ENCODE measurements at regions of chr2 and their contacts with region 1.

Region 1: GRCh38 chr2:205505371-205505770 is 176.9 kb upstream of the NRP2 start:
- DNase-seq: peak in 1 of 2 experiments; percentile 62
- H3K4me3 ChIP-seq: no peak overlapping the region
- H3K4me3 Mint-ChIP-seq: no peak overlapping the region
- H3K27ac Mint-ChIP-seq: peak overlapping the region; percentile 45
- H3K4me1 ChIP-seq: peaks cover 26% of the 10 kb centered on the region
- H3K4me1 Mint-ChIP-seq: peaks cover 39% of the 10 kb centered on the region
- H3K27me3 ChIP-seq: no peaks in the 10 kb centered on the region
- H3K27me3 Mint-ChIP-seq: no peaks in the 10 kb centered on the region
- CTCF ChIP-seq: no peak

Region 2: GRCh38 chr2:204900910-204901309 is 604.5 kb before region 1 on chr2:
- CTCF ChIA-PET with region 1: no interaction called
- POLR2A ChIA-PET with region 1: no interaction called
- intact Hi-C with region 1: loop called (anchors 1 kb)
- DNase-seq: peak; percentile 80 to 86
- H3K4me3 ChIP-seq: no peak overlapping the region
- H3K4me3 Mint-ChIP-seq: peak overlapping the region; percentile 48
- H3K27ac Mint-ChIP-seq: peak overlapping the region; percentile 77
- H3K4me1 ChIP-seq: peaks cover 26% of the 10 kb centered on the region
- H3K4me1 Mint-ChIP-seq: peaks cover 44% of the 10 kb centered on the region
- H3K27me3 ChIP-seq: no peaks in the 10 kb centered on the region
- H3K27me3 Mint-ChIP-seq: no peaks in the 10 kb centered on the region
- CTCF ChIP-seq: no peak

Region 3: DNA sequence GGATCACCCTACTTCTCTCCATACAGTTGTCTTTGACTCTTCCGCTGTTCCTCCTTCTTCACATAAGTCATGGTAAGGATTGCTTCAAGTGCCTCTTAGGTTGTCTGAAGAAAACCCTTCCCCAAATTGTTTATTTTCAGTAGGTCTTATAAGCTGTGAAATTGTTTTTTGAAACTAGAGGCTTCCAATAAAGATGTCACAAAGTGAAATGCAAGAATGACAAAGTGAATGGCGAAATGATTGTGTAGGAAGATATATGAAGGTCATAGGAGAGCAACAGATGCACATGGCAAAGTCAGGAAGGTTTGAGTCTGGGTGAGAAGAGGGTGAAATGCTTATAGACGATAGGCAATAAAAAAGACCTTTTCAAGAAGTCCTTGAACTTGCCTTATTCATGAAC is 411.3 kb before region 1 on chr2:
- CTCF ChIA-PET with region 1: no interaction called
- POLR2A ChIA-PET with region 1: no interaction called
- intact Hi-C with region 1: no loop called
- DNase-seq: no peak
- H3K4me3 ChIP-seq: no peak overlapping the region
- H3K4me3 Mint-ChIP-seq: no peak overlapping the region
- H3K27ac Mint-ChIP-seq: no peak overlapping the region
- H3K4me1 ChIP-seq: no peaks in the 10 kb centered on the region
- H3K4me1 Mint-ChIP-seq: no peaks in the 10 kb centered on the region
- H3K27me3 ChIP-seq: no peaks in the 10 kb centered on the region
- H3K27me3 Mint-ChIP-seq: no peaks in the 10 kb centered on the region
- CTCF ChIP-seq: no peak

Region 4: GRCh38 chr2:205216580-205216979 is 288.8 kb before region 1 on chr2:
- CTCF ChIA-PET with region 1: no interaction called
- POLR2A ChIA-PET with region 1: no interaction called
- intact Hi-C with region 1: loop called (anchors 1 kb)
- DNase-seq: peak; percentile 46 to 56
- H3K4me3 ChIP-seq: no peak overlapping the region
- H3K4me3 Mint-ChIP-seq: no peak overlapping the region
- H3K27ac Mint-ChIP-seq: peak overlapping the region; percentile 78
- H3K4me1 ChIP-seq: peaks cover 57% of the 10 kb centered on the region
- H3K4me1 Mint-ChIP-seq: peaks cover 46% of the 10 kb centered on the region
- H3K27me3 ChIP-seq: no peaks in the 10 kb centered on the region
- H3K27me3 Mint-ChIP-seq: no peaks in the 10 kb centered on the region
- CTCF ChIP-seq: no peak

Region 5: DNA sequence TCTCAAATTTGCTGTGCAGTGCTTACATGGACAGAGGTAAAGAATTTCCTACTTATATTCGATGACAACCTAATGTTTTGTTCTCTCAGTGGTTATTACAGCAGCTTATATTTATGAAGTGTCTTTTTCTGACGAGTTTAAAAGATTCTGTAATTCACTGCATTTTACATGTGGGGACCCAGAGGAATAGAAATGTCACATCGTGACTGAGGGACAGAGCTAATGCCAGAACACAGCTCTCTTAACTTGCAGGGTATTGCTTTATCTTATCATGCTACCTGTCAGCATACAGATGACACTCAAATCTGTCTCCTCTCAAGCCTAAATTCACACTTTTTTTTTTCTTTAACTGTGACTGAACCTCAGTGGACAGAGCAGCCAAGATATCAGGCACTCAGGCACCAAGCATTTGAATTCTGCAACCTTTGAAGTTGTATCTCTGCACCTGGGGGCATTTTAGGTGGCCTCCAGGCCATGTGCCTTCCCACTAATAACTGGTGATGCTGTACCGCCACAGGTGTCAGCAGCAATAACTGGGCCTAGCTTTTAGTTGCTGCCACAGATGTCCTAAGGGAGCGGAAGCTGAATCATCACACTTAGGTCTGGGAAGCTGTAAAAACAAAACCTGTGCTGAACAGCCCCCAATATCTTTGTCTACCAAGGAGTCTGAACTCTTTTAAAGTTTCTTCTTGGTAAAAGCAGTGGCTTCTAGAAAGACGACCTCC is 138.9 kb before region 1 on chr2:
- CTCF ChIA-PET with region 1: no interaction called
- POLR2A ChIA-PET with region 1: no interaction called
- intact Hi-C with region 1: loop called (anchors 1 kb)
- DNase-seq: peak; percentile 63 to 82
- H3K4me3 ChIP-seq: no peak overlapping the region
- H3K4me3 Mint-ChIP-seq: peak overlapping the region; percentile 36
- H3K27ac Mint-ChIP-seq: peak overlapping the region; percentile 71
- H3K4me1 ChIP-seq: peaks cover 36% of the 10 kb centered on the region
- H3K4me1 Mint-ChIP-seq: peaks cover 52% of the 10 kb centered on the region
- H3K27me3 ChIP-seq: no peaks in the 10 kb centered on the region
- H3K27me3 Mint-ChIP-seq: no peaks in the 10 kb centered on the region
- CTCF ChIP-seq: no peak

Region 6: GRCh38 chr2:205474741-205475415 is 30.5 kb before region 1 on chr2:
- CTCF ChIA-PET with region 1: interaction called, 3 read pairs
- POLR2A ChIA-PET with region 1: no interaction called
- intact Hi-C with region 1: loop called (anchors 1 kb)
- DNase-seq: no peak
- H3K4me3 ChIP-seq: no peak overlapping the region
- H3K4me3 Mint-ChIP-seq: no peak overlapping the region
- H3K27ac Mint-ChIP-seq: no peak overlapping the region
- H3K4me1 ChIP-seq: peaks cover 21% of the 10 kb centered on the region
- H3K4me1 Mint-ChIP-seq: peaks cover 14% of the 10 kb centered on the region
- H3K27me3 ChIP-seq: no peaks in the 10 kb centered on the region
- H3K27me3 Mint-ChIP-seq: no peaks in the 10 kb centered on the region
- CTCF ChIP-seq: no peak

Measured in Caco-2 (cell line).